ENCODE measurements at regions of chr11 and their contacts with region 1.

Region 1: DNA sequence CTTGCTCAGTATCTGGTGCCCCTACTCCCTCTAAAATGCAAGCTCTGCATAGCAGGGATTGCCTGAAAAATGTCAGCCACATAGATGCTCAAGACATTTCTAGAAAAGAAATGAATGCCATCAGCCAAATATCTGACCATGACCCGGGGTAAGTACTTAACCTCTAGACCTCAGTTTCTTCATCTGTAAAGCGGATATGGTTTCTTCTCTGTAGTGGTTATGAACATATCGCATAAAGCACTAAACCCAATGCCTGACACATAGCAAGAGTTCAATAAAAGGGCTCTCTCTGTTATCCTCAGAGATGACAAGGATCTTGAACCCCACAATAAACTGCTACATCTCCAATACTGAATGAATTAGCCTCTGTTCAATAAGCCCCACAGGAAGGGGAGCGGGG is 122.6 kb downstream of the ABTB2 start:
- DNase-seq: no peak
- CTCF ChIP-seq: no peak

Region 2: DNA sequence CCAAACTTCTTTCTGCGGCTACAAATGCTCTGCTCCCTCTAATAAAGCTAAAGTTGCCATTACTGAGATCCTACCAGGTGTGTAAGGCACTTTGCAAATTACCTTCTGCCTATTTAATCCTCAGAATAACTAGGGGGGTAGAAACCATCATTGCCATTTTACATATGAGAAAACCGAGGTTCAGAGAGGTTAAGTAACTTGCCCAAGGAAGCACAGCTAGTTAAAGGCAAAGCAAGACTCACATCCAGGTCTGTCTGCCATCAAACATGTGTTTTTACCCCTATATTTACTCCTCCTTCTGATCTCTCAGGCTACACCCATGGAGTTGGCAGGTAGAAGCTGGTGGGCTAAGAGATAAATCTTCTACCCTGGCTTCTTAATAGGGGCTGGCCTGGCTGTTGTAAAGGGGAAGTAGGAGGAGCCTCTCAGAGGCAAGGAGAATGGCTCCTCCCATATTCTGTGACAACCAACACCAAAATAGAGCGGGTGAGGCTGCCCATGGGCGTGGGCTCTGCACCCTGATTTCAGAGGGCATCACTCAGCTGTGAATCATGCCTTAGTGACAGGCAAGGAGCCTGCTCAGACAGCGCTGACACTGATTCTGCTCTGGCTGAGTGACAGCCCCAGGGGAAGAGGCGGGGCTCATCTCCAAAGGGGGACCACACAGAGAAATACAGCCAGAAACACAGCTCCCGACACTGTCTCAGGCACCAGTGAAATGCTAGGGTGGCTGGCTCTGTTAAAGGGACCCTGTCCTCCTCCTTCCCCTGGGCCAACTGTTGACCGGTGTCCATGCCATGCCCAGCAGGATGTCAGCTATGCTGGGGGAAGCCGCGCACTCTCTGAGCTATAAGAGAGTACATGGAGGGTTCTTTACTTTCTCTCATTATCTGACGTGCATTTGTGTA is 15.8 kb after region 1 on chr11:
- CTCF ChIA-PET with region 1: interaction called, 27 read pairs
- POLR2A ChIA-PET with region 1: interaction called, 5 read pairs
- DNase-seq: peak; percentile 56
- CTCF ChIP-seq: no peak